HEK293 (cell line): ENCODE measurements at regions of chr2 and their contacts with region 1.

Region 1: GRCh38 chr2:3780477-3781402 is 77.4 kb downstream of the DCDC2C start:
- H3K4me3 ChIP-seq: no peak overlapping the region
- H3K27ac ChIP-seq: no peak overlapping the region
- H3K4me1 ChIP-seq: no peaks in the 10 kb centered on the region
- CTCF ChIP-seq: no peak

Region 2: DNA sequence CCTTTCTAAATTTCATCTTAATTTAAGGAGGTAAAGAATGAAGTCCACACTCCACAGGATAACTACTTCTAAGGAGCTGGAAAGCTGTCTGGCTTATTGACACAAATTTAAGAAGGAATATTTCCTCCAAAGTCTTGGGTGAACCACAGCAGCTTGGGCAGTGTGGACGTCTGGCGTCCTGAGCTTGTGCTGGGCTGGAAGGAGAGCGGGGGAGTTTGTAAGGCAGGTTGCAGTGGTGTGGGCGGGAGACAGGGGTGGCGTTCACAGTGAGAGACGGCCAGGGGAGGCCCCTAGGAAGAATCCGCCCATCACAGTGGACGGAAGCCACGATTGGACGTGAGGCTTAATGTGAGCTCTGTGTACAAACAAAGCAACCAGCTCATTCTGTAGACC is 287.1 kb before region 1 on chr2:
- CTCF ChIA-PET with region 1: no interaction called
- POLR2A ChIA-PET with region 1: no interaction called
- H3K4me3 ChIP-seq: no peak overlapping the region
- H3K27ac ChIP-seq: no peak overlapping the region
- H3K4me1 ChIP-seq: no peaks in the 10 kb centered on the region
- CTCF ChIP-seq: no peak

Region 3: DNA sequence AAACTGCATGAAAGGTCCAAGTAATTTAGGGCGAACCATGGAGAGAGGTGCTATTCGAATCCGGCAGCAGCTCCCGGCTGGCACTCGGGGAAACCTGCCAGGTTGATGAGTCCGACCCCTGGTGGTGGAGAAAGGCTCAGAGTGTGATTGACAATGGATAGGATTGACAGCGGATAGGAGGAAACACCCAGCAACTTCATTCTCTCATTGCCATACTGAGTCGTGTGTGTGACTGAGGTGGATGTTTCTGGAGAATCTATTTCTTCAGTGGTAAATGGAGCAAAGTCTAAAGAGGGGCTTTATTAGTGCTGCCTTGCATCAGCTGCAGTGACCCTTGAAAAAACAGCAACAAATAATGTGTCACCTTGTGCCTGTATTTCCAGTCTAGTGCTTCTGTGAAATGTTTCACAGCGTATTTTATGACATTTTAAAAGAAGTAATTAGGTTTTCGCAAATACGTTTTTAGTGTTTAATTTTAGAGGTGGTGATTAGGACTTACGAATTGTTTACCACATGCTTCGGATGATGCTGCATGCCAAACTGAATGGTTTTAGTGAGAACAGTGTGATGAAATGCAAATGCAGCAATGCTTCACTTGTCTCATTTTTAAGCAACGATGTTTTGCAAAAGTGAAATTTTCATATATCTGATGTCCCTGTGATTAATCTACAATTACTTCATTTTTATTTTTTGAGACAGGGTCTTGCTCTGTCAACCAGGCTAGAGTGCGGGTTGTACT is 24.6 kb after region 1 on chr2:
- CTCF ChIA-PET with region 1: interaction called, 16 read pairs
- POLR2A ChIA-PET with region 1: no interaction called
- H3K4me3 ChIP-seq: no peak overlapping the region
- H3K27ac ChIP-seq: no peak overlapping the region
- H3K4me1 ChIP-seq: no peaks in the 10 kb centered on the region
- CTCF ChIP-seq: no peak